GM12878 (cell line): ENCODE measurements at regions of chr16 and their contacts with region 1.

Region 1: GRCh38 chr16:87806603-87807546 is 41.1 kb upstream of the KLHDC4 start:
- DNase-seq: no peak
- ATAC-seq: peak; percentile 17
- H3K4me3 ChIP-seq: peak overlapping the region; percentile 24; the same call in 1 of the 2 replicates
- H3K27ac ChIP-seq: peak overlapping the region; percentile 78
- H3K4me1 ChIP-seq: peaks cover 58% of the 10 kb centered on the region
- H3K27me3 ChIP-seq: no peaks in the 10 kb centered on the region
- CTCF ChIP-seq: no peak
- EP300 ChIP-seq: no peak
- POLR2A ChIP-seq: peak; percentile 22
- RAD21 ChIP-seq: no peak

Region 2: GRCh38 chr16:87860553-87861299 is 53.9 kb after region 1 on chr16:
- CTCF ChIA-PET with region 1: interaction called, 20 read pairs
- POLR2A ChIA-PET with region 1: interaction called, 25 read pairs
- RAD21 ChIA-PET with region 1: interaction called, 6 read pairs
- SMC1A ChIA-PET with region 1: interaction called, 12 read pairs
- in situ Hi-C with region 1: no loop called
- intact Hi-C with region 1: no loop called
- DNase-seq: no peak
- ATAC-seq: peak; percentile 60
- H3K4me3 ChIP-seq: 0 out of 2 replicates have a peak overlapping the region, but pooled peaks have one; percentile 39
- H3K27ac ChIP-seq: peak overlapping the region; percentile 25
- H3K4me1 ChIP-seq: peaks cover 47% of the 10 kb centered on the region
- H3K27me3 ChIP-seq: no peaks in the 10 kb centered on the region
- CTCF ChIP-seq: no peak
- EP300 ChIP-seq: no peak
- POLR2A ChIP-seq: no peak
- RAD21 ChIP-seq: no peak